Right ventricle myocardium inferior (tissue), 1 donor: ENCODE measurements at regions of chr15 and their contacts with region 1.

Region 1: DNA sequence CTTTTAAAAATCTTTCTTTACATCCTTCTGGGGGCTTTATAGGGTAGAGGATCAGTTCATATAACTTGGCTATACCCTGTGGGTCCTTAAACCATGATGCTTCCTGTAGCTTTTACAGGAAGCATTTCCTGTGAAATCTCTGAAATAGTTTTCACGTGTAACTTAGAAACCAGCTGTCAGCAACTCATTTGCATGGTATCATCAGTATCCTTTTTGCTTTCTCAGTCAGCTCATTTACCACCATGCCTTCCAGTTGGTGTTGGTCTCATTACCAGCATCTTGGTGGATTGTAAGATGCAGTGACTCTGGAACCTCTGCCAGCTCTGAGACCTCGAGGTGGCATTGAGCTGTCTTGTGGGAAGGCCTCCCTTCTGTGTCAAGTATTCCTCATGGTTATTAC is 96.7 kb upstream of the MYZAP start:
- DNase-seq: no peak
- ATAC-seq: no peak

Region 2: GRCh38 chr15:57382215-57382614 is 112.8 kb before region 1 on chr15:
- intact Hi-C with region 1: loop called (anchors 2 kb)
- DNase-seq: no peak
- ATAC-seq: no peak

Region 3: GRCh38 chr15:57654153-57654852 is 159.3 kb after region 1 on chr15:
- intact Hi-C with region 1: no loop called
- DNase-seq: no peak
- ATAC-seq: no peak